AG04449 (cell line): ENCODE measurements at regions of chr2 and their contacts with region 1.

Region 1: GRCh38 chr2:117835990-117836760 is 21.7 kb downstream of the DDX18 start:
- DNase-seq: peak; percentile 29
- H3K4me3 ChIP-seq: peak overlapping the region; percentile 55
- CTCF ChIP-seq: peak; percentile 97

Region 2: DNA sequence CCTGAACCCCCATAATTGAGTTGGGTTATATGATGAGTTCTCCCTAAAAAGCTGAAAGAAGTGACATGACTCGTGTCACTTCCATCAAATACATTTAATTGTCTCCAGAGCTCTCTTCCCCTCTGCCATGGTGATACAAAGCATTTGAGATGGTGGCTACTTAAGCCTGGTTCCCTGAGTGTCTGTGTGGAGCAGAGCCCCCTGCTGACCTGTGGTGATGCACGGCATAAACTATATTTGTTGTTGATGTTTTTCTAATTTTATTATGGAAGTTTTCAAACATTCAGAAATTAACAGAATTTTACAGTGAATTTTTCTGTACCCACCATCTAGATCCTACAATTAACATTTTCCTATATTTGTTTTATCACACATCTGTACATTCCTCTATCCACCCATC is 82.3 kb before region 1 on chr2:
- CTCF ChIA-PET with region 1: no interaction called
- POLR2A ChIA-PET with region 1: no interaction called
- DNase-seq: no peak
- H3K4me3 ChIP-seq: no peak overlapping the region
- CTCF ChIP-seq: no peak

Region 3: DNA sequence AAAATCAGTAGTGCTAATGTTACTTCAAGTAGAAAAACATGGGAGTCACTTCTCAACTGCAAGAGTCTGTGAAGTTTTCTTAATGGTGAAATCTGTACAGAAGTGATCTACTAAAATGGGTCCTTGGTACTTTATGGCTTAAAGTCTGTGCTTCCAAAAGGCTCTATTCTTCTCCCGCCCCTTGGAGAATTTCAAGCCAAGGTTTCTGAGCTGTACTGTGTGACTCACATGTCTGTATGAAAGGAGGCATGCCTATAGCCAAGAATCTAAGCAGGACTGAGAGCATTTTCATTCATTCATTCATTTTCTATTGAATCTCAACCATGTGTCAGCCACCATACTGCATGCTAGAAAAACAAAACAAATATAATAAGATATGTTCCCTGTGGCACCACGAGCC is 41.5 kb before region 1 on chr2:
- CTCF ChIA-PET with region 1: no interaction called
- POLR2A ChIA-PET with region 1: no interaction called
- DNase-seq: no peak
- H3K4me3 ChIP-seq: no peak overlapping the region
- CTCF ChIP-seq: no peak

Region 4: GRCh38 chr2:117850015-117850414 is 13.8 kb after region 1 on chr2:
- CTCF ChIA-PET with region 1: interaction called, 11 read pairs
- POLR2A ChIA-PET with region 1: interaction called, 3 read pairs
- DNase-seq: no peak
- H3K4me3 ChIP-seq: no peak overlapping the region
- CTCF ChIP-seq: no peak

Region 5: GRCh38 chr2:117917223-117917917 is 81.2 kb after region 1 on chr2:
- CTCF ChIA-PET with region 1: interaction called, 26 read pairs
- POLR2A ChIA-PET with region 1: no interaction called
- DNase-seq: no peak
- H3K4me3 ChIP-seq: no peak overlapping the region
- CTCF ChIP-seq: peak; percentile 38

Region 6: GRCh38 chr2:117989854-117990438 is 153.8 kb after region 1 on chr2:
- CTCF ChIA-PET with region 1: interaction called, 45 read pairs
- POLR2A ChIA-PET with region 1: interaction called, 3 read pairs
- DNase-seq: no peak
- H3K4me3 ChIP-seq: no peak overlapping the region
- CTCF ChIP-seq: no peak